Mammary epithelial cell (primary cell): ENCODE measurements at regions of chr11 and their contacts with region 1.

Region 1: DNA sequence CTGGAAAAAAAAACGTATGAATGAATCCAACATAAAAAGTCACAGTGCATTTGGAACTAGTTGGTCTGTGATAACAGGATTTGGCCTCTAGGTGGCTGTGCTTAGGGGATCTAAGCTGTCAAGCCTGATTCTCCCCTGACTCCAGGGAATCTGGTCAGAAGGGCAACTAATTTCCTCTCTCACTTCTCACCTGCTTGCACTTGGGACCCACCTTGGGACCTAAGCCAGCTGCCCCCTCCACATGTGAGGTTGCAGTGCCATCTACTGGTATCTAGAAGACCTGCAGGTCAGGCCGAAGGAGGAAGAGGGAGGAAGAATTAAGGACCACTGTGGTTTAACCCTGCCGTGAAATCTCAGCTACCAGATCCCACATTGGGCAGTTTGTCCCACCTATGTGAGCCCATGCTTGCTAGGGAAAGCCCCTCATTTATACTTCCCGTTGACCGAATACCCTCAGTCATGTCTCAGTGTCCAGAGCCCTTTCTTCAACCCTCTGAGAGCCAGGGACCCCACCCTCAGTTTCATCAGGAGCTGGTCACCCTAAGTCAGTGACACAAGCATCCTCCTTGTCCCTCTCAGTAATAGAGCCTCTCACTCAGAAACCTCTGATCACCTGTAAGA is 33.2 kb upstream of the CAVIN3 start:
- DNase-seq: peak; percentile 68
- H3K4me3 ChIP-seq: no peak overlapping the region
- H3K27ac ChIP-seq: no peak overlapping the region
- H3K4me1 ChIP-seq: peaks cover 11% of the 10 kb centered on the region
- H3K27me3 ChIP-seq: no peaks in the 10 kb centered on the region
- CTCF ChIP-seq: peak; percentile 85 to 98

Region 2: DNA sequence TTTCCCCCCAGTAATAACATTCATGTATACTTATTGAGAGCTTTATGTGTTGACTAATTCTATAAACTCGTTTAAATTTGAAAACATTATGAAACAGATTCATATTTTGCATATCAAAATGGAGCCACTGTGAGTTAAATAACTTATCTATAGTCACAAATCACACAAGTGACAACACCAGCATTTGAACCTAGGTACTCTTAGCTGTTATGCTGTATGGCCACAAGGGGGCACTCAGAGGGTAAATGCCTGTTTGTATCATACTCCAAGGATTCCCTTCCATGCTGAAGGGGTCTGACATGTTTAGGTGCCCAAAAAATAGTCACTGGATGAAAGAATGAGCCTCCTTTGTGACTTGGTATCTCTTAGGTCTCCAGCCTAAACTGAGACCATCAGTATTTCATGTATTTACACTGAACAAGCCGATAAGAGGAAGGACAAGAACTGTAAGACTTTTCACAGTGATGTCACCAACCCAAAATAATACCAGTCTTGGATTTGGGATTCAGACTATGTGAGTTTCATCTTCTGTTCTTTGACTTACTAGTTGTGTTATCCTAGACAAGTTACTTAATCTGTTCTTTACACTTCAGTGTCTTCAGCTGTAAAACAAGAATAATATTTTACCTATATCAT is 877.2 kb before region 1 on chr11:
- CTCF ChIA-PET with region 1: no interaction called
- dilution Hi-C with region 1: no loop called
- in situ Hi-C with region 1: no loop called
- intact Hi-C with region 1: loop called (anchors 10 kb)
- DNase-seq: peak; percentile 27
- H3K4me3 ChIP-seq: no peak overlapping the region
- H3K27ac ChIP-seq: no peak overlapping the region
- H3K4me1 ChIP-seq: no peaks in the 10 kb centered on the region
- H3K27me3 ChIP-seq: peaks cover 3% of the 10 kb centered on the region
- CTCF ChIP-seq: peak; percentile 86 to 89

Region 3: DNA sequence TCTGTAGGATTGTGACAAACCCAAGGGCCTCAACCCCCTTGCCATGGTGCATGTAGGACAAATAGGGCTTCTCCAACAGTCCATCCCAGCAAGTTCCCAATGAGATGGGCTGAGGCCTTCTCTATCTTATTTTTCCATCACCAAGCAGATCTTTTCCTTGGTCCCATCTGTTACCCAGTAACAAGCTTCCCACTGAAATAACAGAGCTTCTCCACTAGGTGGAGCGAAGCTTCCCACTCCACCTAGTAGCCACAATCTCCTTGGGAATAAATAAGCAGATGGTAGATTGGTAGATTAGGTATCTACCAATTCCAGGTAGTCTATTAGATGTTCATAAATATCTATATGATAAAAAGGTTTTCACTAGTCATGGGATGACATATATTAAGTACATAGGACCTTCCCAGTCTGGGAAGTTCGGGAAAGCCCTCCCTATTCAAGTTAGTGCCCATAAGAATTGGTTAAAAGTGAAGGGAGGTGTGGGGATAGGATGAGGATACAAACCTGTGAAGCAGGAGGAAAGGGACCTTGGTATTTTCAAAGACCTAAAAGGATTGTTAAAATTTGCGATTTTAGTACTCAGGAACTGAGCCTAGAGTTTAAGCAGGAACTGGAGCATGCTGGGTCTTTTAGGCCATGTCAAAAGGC is 360.7 kb before region 1 on chr11:
- CTCF ChIA-PET with region 1: no interaction called
- dilution Hi-C with region 1: no loop called
- in situ Hi-C with region 1: no loop called
- intact Hi-C with region 1: loop called (anchors 1 kb)
- DNase-seq: peak; percentile 18
- H3K4me3 ChIP-seq: no peak overlapping the region
- H3K27ac ChIP-seq: no peak overlapping the region
- H3K4me1 ChIP-seq: no peaks in the 10 kb centered on the region
- H3K27me3 ChIP-seq: no peaks in the 10 kb centered on the region
- CTCF ChIP-seq: peak; percentile 49 to 65

Region 4: GRCh38 chr11:6251120-6251733 is 102.2 kb before region 1 on chr11:
- CTCF ChIA-PET with region 1: no interaction called
- dilution Hi-C with region 1: no loop called
- in situ Hi-C with region 1: no loop called
- intact Hi-C with region 1: loop called (anchors 1 kb)
- DNase-seq: peak; percentile 56
- H3K4me3 ChIP-seq: no peak overlapping the region
- H3K27ac ChIP-seq: no peak overlapping the region
- H3K4me1 ChIP-seq: no peaks in the 10 kb centered on the region
- H3K27me3 ChIP-seq: no peaks in the 10 kb centered on the region
- CTCF ChIP-seq: peak; percentile 92 to 94

Region 5: DNA sequence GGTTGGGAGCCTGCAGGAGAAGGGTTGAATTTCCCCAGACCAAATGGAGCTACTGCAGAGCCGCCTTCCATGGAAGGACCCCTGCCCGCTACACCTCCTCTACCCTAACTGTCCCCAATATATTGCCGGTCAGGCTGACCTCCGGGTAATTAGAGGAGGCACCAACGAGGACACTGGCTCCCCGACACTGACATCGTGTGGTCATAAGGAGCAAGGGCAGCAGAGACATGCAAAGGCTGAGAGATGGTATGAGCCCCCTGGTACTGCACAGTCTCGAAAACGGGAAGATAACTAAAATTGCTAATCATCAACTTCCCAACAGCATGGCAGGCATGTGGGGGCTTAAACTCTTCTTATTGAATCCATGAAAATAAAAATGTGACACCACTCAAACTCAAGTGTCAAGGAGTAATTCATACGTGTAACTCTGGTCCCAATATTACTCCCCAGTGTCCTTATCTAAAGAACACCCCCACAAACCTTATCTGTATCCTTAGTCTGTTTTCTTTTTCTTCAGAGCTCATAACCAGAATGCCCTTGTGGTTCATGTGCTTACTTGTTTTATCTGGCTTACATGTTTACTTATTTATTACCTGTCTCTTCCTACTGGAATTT is 37.6 kb before region 1 on chr11:
- CTCF ChIA-PET with region 1: interaction called, 3 read pairs
- dilution Hi-C with region 1: no loop called
- in situ Hi-C with region 1: no loop called
- intact Hi-C with region 1: loop called (anchors 1 kb)
- DNase-seq: peak; percentile 40
- H3K4me3 ChIP-seq: no peak overlapping the region
- H3K27ac ChIP-seq: no peak overlapping the region
- H3K4me1 ChIP-seq: peaks cover 22% of the 10 kb centered on the region
- H3K27me3 ChIP-seq: no peaks in the 10 kb centered on the region
- CTCF ChIP-seq: peak; percentile 93 to 96

Region 6: GRCh38 chr11:6452219-6452618 is 98.7 kb after region 1 on chr11:
- CTCF ChIA-PET with region 1: no interaction called
- dilution Hi-C with region 1: no loop called
- in situ Hi-C with region 1: no loop called
- intact Hi-C with region 1: no loop called
- DNase-seq: no peak
- H3K4me3 ChIP-seq: no peak overlapping the region
- H3K27ac ChIP-seq: no peak overlapping the region
- H3K4me1 ChIP-seq: no peaks in the 10 kb centered on the region
- H3K27me3 ChIP-seq: no peaks in the 10 kb centered on the region
- CTCF ChIP-seq: no peak